HepG2 (cell line): ENCODE measurements at regions of chr16 and their contacts with region 1.

Region 1: GRCh38 chr16:401468-402348 is at the start of gene DECR2:
- DNase-seq: peak; percentile 76
- ATAC-seq: peak; percentile 61
- H3K4me3 ChIP-seq: peak within 1 kb of the TSS; percentile 81 to 85 (median 83)
- H3K27ac ChIP-seq: peak within 1 kb of the TSS; percentile 97
- H3K4me1 ChIP-seq: peaks cover 66% of the 10 kb centered on the region
- H3K27me3 ChIP-seq: no peaks in the 10 kb centered on the region
- CTCF ChIP-seq: peak; percentile 67
- EP300 ChIP-seq: no peak
- POLR2A ChIP-seq: peak; percentile 70 to 95
- RAD21 ChIP-seq: peak; percentile 77
- total RNA-seq, gene DECR2: 27.8 and 36.3 TPM in 2 replicates

Region 2: GRCh38 chr16:203246-203645 is 198.5 kb before region 1 on chr16:
- CTCF ChIA-PET with region 1: no interaction called
- POLR2A ChIA-PET with region 1: no interaction called
- in situ Hi-C with region 1: no loop called
- intact Hi-C with region 1: no loop called
- DNase-seq: no peak
- ATAC-seq: no peak
- H3K4me3 ChIP-seq: no peak overlapping the region
- H3K27ac ChIP-seq: no peak overlapping the region
- H3K4me1 ChIP-seq: no peaks in the 10 kb centered on the region
- H3K27me3 ChIP-seq: no peaks in the 10 kb centered on the region
- CTCF ChIP-seq: no peak
- EP300 ChIP-seq: no peak
- POLR2A ChIP-seq: no peak
- RAD21 ChIP-seq: no peak

Region 3: GRCh38 chr16:346587-346986 is 55.1 kb before region 1 on chr16:
- CTCF ChIA-PET with region 1: no interaction called
- POLR2A ChIA-PET with region 1: no interaction called
- in situ Hi-C with region 1: no loop called
- intact Hi-C with region 1: no loop called
- DNase-seq: no peak
- ATAC-seq: no peak
- H3K4me3 ChIP-seq: no peak overlapping the region
- H3K27ac ChIP-seq: no peak overlapping the region
- H3K4me1 ChIP-seq: peaks cover 78% of the 10 kb centered on the region
- H3K27me3 ChIP-seq: no peaks in the 10 kb centered on the region
- CTCF ChIP-seq: no peak
- EP300 ChIP-seq: no peak
- POLR2A ChIP-seq: no peak
- RAD21 ChIP-seq: no peak

Region 4: DNA sequence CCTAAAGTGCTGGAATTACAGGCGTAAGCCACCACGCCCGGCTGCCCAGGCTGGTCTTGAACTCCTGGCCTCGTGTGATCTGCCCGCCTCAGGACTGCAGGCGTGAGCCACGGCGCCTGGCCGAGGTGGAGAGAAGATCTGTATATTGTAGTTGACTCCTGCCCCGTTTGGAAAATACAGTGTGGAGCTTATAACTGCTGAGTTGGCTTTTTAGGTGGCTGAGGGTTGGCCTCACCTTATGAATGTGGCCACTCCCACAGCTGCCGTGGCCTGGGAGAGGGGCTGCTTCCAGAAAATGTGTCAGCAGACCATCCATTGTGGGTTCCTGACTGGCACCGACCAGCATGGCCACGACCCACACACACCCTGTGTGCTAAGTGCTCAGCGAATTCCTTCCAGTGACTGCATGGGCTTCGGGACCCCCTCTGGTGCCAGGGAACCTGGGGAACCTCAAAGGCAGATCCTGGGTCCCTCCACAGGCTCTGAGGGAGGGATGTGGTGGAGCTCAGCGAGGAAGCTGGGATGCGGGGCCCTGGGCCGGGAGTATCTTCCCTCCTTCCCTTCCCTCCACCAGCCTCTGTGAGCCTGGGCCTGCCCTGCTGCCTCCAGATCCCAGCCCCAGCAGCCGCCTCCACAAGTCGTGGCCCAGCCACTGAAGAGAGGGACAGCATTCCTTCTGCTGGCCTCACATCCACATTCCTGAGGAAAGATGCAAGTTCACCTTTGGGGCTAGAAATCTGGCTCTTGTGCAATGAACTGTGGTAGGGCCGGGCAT is 12.9 kb after region 1 on chr16:
- CTCF ChIA-PET with region 1: no interaction called
- POLR2A ChIA-PET with region 1: interaction called, 15 read pairs
- in situ Hi-C with region 1: no loop called
- intact Hi-C with region 1: no loop called
- DNase-seq: no peak
- ATAC-seq: peak; percentile 37
- H3K4me3 ChIP-seq: no peak overlapping the region
- H3K27ac ChIP-seq: no peak overlapping the region
- H3K4me1 ChIP-seq: peaks cover 17% of the 10 kb centered on the region
- H3K27me3 ChIP-seq: no peaks in the 10 kb centered on the region
- CTCF ChIP-seq: no peak
- EP300 ChIP-seq: no peak
- POLR2A ChIP-seq: no peak; a peak in 1 of 4 replicates
- RAD21 ChIP-seq: no peak

Region 5: GRCh38 chr16:425082-425718 is 23.5 kb after region 1 on chr16 and contains the start of gene RAB11FIP3:
- CTCF ChIA-PET with region 1: no interaction called
- POLR2A ChIA-PET with region 1: interaction called, 21 read pairs
- in situ Hi-C with region 1: no loop called
- intact Hi-C with region 1: loop called (anchors 2 kb)
- DNase-seq: peak; percentile 53
- ATAC-seq: peak; percentile 83
- H3K4me3 ChIP-seq: peak within 1 kb of the TSS; percentile 66 to 95 (median 87)
- H3K27ac ChIP-seq: peak within 1 kb of the TSS; percentile 45
- H3K4me1 ChIP-seq: peaks cover 51% of the 10 kb centered on the region
- H3K27me3 ChIP-seq: no peaks in the 10 kb centered on the region; a peak in 1 of 5 replicates
- CTCF ChIP-seq: peak; percentile 68
- EP300 ChIP-seq: no peak
- POLR2A ChIP-seq: peak in 1 of 2 experiments; percentile 85; a peak in 2 of 4 replicates
- RAD21 ChIP-seq: peak; percentile 35; the same call in 1 of the 2 replicates
- total RNA-seq, gene RAB11FIP3: 48.4 and 57.6 TPM in 2 replicates

Region 6: DNA sequence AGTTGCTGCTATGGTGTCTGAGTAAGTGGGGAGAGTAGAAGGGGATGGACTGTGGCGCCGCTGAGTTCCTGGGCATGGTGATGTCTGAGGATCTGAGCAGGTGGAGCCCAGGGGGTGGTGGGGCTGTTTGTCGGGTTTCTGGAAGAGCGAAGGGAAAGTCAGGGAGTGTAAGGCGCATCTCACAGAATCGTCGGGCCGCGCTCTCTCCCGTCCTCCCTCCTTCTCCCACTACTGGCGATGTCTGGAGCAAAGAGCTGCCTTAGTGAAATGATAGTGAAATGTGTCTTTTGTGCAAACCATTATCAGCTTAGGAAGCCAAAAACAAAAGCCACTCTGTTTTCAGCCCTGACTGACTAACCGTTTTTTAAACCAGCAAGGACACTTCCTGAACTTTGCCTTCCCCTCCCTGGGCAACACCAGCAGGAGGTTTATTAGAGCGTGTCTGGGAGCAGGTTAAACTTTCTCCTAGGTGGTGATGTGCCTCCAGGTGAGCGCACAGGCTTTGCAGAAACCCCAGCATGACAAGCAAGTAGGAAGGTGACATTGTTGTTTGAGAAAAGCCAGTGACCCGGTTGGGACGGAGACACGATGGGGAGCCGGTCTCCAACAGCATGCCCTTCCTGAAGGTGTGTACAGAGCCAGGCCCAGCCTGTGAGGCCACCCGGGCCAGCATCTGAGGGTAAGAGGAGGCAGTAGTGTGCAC is 72.9 kb after region 1 on chr16:
- CTCF ChIA-PET with region 1: no interaction called
- POLR2A ChIA-PET with region 1: interaction called, 18 read pairs
- in situ Hi-C with region 1: no loop called
- intact Hi-C with region 1: loop called (anchors 2 kb)
- DNase-seq: peak; percentile 87
- ATAC-seq: peak; percentile 86
- H3K4me3 ChIP-seq: peak overlapping the region; percentile 64 to 73 (median 66)
- H3K27ac ChIP-seq: peak overlapping the region; percentile 79
- H3K4me1 ChIP-seq: peaks cover 55% of the 10 kb centered on the region
- H3K27me3 ChIP-seq: no peaks in the 10 kb centered on the region
- CTCF ChIP-seq: peak; percentile 21; the same call in 1 of the 2 replicates
- EP300 ChIP-seq: peak in 1 of 2 experiments; percentile 70; a peak in 2 of 4 replicates
- POLR2A ChIP-seq: peak; percentile 64 to 72
- RAD21 ChIP-seq: no peak

Region 7: DNA sequence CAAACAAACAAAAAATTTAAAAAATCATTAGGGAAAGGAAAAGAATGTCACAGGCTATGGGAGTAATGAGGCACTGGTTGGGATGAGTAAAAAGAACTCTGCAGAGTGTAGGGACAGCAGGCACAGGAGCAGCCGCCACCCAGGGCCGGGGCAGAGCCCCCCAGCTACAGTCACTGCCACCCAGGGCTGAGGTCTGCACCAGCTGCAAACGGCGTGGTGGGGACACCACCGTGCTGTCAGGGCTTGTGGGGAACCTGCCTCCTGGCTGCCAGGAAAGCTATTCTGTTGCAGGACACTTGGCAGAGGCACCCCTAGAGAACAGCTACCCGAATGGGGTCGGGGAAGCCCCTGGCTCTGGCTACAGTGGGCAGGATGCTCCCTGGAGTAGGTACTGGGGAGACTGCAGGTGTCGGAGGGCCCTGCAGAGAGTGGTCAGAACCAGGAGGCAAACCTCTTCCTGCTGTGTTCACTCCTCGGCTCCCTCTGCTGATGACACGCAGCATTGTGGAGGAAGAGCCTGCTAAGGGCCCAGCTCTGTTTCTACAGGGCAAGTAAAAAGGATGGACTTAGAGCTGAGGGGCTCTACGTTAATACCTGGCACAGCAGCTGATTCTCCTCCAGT is 93.5 kb after region 1 on chr16:
- CTCF ChIA-PET with region 1: no interaction called
- POLR2A ChIA-PET with region 1: interaction called, 4 read pairs
- in situ Hi-C with region 1: loop called (anchors 5 kb)
- intact Hi-C with region 1: no loop called
- DNase-seq: peak; percentile 59
- ATAC-seq: peak; percentile 94
- H3K4me3 ChIP-seq: no peak overlapping the region
- H3K27ac ChIP-seq: no peak overlapping the region
- H3K4me1 ChIP-seq: peaks cover 15% of the 10 kb centered on the region
- H3K27me3 ChIP-seq: no peaks in the 10 kb centered on the region
- CTCF ChIP-seq: peak; percentile 71
- EP300 ChIP-seq: no peak
- POLR2A ChIP-seq: no peak
- RAD21 ChIP-seq: peak; percentile 67

Region 8: DNA sequence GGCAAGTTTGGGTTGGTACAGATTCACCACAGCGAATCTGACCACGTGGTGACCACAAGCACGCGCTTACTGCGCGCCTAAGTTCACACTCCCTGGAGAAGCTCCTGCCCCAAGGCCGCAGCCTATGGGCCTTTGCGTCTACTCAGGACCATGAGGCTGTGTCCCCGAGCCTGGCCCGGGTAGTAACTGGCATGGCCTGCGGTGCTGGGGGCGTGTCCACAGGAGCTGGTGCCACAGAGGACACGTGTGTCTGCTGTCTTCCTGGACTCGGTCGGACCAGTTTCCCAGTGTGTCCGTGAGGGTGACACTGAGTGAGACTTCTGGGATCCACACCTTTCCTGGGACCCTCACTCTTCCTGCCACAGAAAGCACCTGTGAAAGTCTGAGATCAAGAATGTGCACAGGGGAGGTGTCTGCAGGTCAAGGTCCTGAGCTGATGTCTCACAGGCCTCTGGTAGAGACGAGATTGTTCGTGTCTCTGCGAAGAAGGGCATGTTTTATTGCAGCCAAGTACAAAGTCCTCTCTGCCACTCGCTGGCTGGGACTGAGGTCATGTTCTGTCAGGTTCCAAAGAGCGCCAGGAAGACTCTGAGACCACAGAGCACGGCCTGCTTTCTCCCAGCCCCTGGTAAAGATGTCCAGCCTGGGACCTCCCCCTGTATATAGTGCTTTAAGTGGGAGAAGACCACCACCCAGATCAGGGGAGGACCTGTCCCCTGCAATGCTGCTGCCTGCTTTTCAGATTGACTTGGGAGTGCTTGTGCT is 100.7 kb after region 1 on chr16:
- CTCF ChIA-PET with region 1: no interaction called
- POLR2A ChIA-PET with region 1: interaction called, 15 read pairs
- in situ Hi-C with region 1: loop called (anchors 5 kb)
- intact Hi-C with region 1: no loop called
- DNase-seq: peak; percentile 86
- ATAC-seq: peak; percentile 82
- H3K4me3 ChIP-seq: peak overlapping the region; percentile 24 to 65 (median 44)
- H3K27ac ChIP-seq: peak overlapping the region; percentile 93
- H3K4me1 ChIP-seq: peaks cover 59% of the 10 kb centered on the region
- H3K27me3 ChIP-seq: no peaks in the 10 kb centered on the region
- CTCF ChIP-seq: 0 out of 2 replicates have a peak, but pooled peaks have one; percentile 23
- EP300 ChIP-seq: peak; percentile 17 to 56; a peak in 2 of 4 replicates
- POLR2A ChIP-seq: peak; percentile 41 to 67; a peak in 3 of 4 replicates
- RAD21 ChIP-seq: no peak